Endothelial cell of umbilical vein (primary cell): ENCODE measurements at regions of chr4 and their contacts with region 1.

Region 1: GRCh38 chr4:54941994-54942552 is 183.3 kb downstream of the KDR start:
- DNase-seq: peak; percentile 99
- H3K4me3 ChIP-seq: peak overlapping the region in 1 of 3 experiments; percentile 2
- H3K27ac ChIP-seq: peak overlapping the region; percentile 96
- H3K4me1 ChIP-seq: peaks cover 54% of the 10 kb centered on the region
- H3K27me3 ChIP-seq: no peaks in the 10 kb centered on the region
- CTCF ChIP-seq: no peak
- POLR2A ChIP-seq: peak; percentile 62

Region 2: GRCh38 chr4:54433686-54434085 is 508.4 kb before region 1 on chr4:
- CTCF ChIA-PET with region 1: no interaction called
- POLR2A ChIA-PET with region 1: no interaction called
- dilution Hi-C with region 1: no loop called
- intact Hi-C with region 1: loop called (anchors 5 kb)
- DNase-seq: peak; percentile 30
- H3K4me3 ChIP-seq: no peak overlapping the region
- H3K27ac ChIP-seq: no peak overlapping the region
- H3K4me1 ChIP-seq: no peaks in the 10 kb centered on the region
- H3K27me3 ChIP-seq: peaks cover 2 to 5% of the 10 kb centered on the region in 2 experiments
- CTCF ChIP-seq: peak; percentile 48 to 49
- POLR2A ChIP-seq: no peak

Region 3: DNA sequence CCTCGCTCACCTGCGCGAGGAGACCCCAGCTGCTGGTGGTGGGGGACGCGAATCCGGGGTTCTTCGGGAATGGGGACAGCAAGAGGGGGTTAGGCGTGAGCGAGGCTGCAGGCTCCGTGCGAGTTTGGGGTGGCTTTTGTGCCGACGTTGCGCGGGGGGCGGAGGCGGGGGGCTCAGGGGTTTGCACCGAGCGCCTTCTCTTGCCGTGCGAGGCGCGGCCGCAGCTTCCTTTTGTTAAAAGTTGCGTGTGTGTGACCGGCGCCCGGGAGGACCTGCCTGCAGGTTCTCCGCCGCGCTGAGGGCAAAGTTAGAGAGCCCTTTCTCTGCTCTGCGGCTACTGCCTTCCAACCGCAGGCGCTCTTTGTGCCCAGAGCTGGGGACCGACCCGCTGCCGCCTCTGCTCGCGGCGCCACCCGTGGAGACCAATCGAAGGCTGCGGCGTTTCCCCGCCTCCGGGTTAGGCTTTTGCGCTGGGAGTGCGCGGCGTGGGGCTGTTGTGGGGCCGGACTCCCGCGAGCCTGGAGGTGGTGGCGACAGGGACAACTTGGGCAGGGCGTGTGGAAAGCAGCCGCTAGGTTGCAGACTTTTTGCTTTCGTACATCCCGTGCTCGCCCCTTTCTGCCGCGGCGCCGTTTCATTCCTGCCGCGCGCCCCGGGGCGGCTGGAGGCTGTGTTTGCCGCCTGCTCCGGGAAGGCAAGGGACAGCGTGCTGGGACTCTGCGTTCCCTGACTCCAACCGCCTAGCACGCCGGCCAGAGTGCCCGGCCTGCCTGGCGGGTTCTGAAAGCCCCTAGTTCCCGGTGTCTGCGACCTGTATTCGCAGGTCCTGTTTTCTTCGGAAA is 283.6 kb before region 1 on chr4:
- CTCF ChIA-PET with region 1: no interaction called
- POLR2A ChIA-PET with region 1: no interaction called
- dilution Hi-C with region 1: no loop called
- intact Hi-C with region 1: loop called (anchors 1 kb)
- DNase-seq: peak; percentile 62
- H3K4me3 ChIP-seq: peak overlapping the region; percentile 46 to 69 (median 54)
- H3K27ac ChIP-seq: no peak overlapping the region
- H3K4me1 ChIP-seq: peaks cover 16% of the 10 kb centered on the region
- H3K27me3 ChIP-seq: peaks cover 27 to 70% of the 10 kb centered on the region in 2 experiments
- CTCF ChIP-seq: peak in 1 of 2 donors; percentile 47
- POLR2A ChIP-seq: no peak

Region 4: GRCh38 chr4:54746218-54746617 is 195.9 kb before region 1 on chr4:
- CTCF ChIA-PET with region 1: no interaction called
- POLR2A ChIA-PET with region 1: no interaction called
- dilution Hi-C with region 1: no loop called
- intact Hi-C with region 1: loop called (anchors 10 kb)
- DNase-seq: no peak
- H3K4me3 ChIP-seq: no peak overlapping the region
- H3K27ac ChIP-seq: no peak overlapping the region
- H3K4me1 ChIP-seq: no peaks in the 10 kb centered on the region
- H3K27me3 ChIP-seq: no peaks in the 10 kb centered on the region
- CTCF ChIP-seq: no peak
- POLR2A ChIP-seq: no peak

Region 5: DNA sequence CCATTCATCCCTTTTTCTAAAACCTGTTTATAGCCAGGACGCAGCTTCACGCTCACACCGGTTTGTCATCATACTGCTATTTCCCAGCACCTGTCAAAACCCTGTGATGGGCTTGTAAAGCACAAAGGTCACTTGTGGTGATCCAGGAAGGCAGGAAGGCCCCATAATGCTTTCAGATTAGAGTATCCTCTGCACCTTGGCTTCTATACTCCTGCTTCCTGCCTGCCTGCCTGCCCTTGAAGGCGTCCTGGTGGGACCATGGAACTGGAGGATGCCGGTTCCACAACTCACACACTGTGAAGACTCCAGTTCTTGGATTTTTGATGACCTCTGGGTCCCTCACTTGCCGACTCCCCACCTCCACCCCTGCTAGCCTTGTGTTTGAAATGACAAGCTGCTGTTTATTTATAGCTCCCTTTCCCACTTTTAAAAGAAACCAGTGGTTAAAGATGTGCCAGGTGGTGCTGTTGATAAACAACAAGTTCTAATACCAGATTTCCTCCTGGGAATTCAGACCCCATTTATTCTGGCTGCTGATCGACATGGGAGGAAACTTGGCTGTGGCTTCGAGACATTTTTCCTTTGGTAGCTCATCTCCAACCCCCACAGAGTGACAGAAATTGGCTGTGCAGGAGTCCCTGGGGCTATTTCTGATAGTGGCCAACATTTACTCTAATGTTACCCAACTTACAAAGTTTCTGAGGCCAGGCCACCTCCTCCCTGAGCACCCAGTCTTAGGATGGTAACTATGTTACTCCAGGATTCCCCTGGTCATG is 28.1 kb before region 1 on chr4:
- CTCF ChIA-PET with region 1: interaction called, 3 read pairs
- POLR2A ChIA-PET with region 1: interaction called, 6 read pairs
- dilution Hi-C with region 1: no loop called
- intact Hi-C with region 1: loop called (anchors 1 kb)
- DNase-seq: peak; percentile 62
- H3K4me3 ChIP-seq: no peak overlapping the region
- H3K27ac ChIP-seq: no peak overlapping the region
- H3K4me1 ChIP-seq: no peaks in the 10 kb centered on the region
- H3K27me3 ChIP-seq: peaks cover 34 to 47% of the 10 kb centered on the region in 2 experiments
- CTCF ChIP-seq: no peak
- POLR2A ChIP-seq: no peak

Region 6: DNA sequence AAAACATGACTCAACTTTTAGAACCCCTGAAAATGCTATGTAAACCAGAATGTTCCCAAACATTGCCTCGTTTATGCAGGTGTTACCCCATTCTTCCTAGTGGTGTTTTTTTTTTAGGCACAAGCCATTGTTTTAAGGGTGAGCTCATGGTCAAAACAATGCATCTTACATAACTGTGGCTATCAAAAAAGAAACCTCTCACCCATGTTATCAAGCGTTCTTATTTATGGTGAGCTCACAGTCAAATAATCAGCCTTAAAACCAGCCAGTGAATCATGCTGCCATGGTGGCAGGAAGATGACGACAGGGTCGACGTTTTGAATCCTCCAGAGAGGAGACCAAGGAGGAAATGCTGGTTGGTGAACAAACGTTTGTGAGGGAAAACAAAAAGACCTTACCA is 11.8 kb before region 1 on chr4:
- CTCF ChIA-PET with region 1: interaction called, 21 read pairs
- POLR2A ChIA-PET with region 1: interaction called, 19 read pairs
- dilution Hi-C with region 1: no loop called
- intact Hi-C with region 1: loop called (anchors 1 kb)
- DNase-seq: peak; percentile 99
- H3K4me3 ChIP-seq: peak overlapping the region in 1 of 3 experiments; percentile 28
- H3K27ac ChIP-seq: peak overlapping the region; percentile 99
- H3K4me1 ChIP-seq: peaks cover 33% of the 10 kb centered on the region
- H3K27me3 ChIP-seq: no peaks in the 10 kb centered on the region
- CTCF ChIP-seq: no peak
- POLR2A ChIP-seq: no peak

Region 7: DNA sequence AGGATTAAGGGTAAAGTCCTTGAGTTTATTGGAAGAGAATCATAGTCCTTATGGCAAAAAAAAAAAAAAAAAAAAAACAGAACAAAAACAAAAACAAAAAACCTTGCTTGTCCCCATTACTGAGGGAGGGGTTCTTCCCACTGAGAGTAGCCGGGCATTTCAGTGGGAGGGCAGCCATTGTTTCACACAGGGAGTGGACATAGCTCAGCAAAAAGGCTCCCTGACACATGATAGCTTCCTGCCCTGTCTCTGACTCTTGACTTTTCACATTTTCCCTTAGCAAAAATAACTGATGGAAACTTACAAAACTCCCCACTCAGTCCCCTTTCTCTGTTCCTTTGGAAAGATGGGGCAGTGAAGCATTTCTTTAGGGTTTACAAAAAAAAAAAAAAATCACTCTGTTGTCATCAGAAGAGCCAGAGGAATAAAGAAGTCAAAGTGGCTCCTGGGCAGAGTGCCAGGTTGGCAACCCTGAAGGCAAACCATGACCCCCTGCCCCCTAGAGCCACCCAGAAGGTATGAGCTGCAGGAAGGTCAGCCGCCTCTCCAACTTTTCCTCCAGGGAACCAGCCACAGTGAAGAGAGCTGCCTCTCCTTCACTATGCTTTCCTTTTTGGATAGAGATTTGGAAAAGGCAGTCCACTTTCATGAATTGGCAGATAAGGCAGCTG is 12.7 kb after region 1 on chr4:
- CTCF ChIA-PET with region 1: interaction called, 11 read pairs
- POLR2A ChIA-PET with region 1: no interaction called
- dilution Hi-C with region 1: no loop called
- intact Hi-C with region 1: no loop called
- DNase-seq: peak; percentile 60
- H3K4me3 ChIP-seq: no peak overlapping the region
- H3K27ac ChIP-seq: no peak overlapping the region
- H3K4me1 ChIP-seq: peaks cover 9% of the 10 kb centered on the region
- H3K27me3 ChIP-seq: no peaks in the 10 kb centered on the region
- CTCF ChIP-seq: no peak
- POLR2A ChIP-seq: no peak